Activated CD4-positive, alpha-beta memory T cell treated with anti-CD3 and anti-CD28 coated beads, Interleukin-2, amount 10 ng/mL, durations not matched to agents 7 days and 5 days (primary cell): ENCODE measurements at regions of chr6 and their contacts with region 1.

Region 1: GRCh38 chr6:132798869-132799538 is 567 bp upstream of the SLC18B1 start:
- DNase-seq: peak; percentile 71
- H3K4me3 Mint-ChIP-seq: peak overlapping the region; percentile 88
- H3K27ac Mint-ChIP-seq: no peak overlapping the region
- H3K4me1 Mint-ChIP-seq: peaks cover 15% of the 10 kb centered on the region
- H3K27me3 Mint-ChIP-seq: peaks cover 5% of the 10 kb centered on the region

Region 2: DNA sequence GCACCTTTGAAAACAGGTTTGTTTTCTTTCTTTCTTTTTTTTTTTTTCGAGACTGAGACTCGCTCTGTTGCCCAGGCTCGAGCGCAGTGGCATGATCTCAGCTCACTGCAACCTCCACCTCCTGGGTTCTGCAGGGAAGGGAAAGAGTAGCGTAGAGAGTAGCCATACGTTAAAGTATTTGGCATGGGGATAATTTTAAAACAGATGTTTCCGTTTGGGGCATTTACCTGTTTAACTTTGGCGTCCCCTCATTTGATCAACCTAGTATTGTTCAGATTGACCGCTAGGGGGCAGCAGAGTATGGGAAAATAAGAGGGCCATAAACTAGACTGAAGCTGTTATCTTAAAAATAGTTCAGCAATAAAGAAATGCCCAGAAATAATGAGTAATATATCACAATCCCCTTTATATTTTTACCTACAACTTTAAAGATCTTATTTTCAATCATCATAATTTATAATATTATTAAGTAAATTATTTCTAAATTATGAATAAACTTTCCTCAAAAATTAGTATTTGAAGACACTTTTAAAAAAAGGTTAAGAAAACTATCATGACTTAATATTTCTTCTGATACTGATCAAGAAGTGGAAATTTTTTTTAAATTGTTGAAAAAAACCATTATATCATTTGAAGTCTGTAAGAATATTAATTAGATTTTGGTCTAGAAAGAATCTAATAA is 268.6 kb before region 1 on chr6:
- CTCF ChIA-PET with region 1: interaction called, 13 read pairs
- POLR2A ChIA-PET with region 1: no interaction called
- DNase-seq: peak; percentile 69
- H3K4me3 Mint-ChIP-seq: no peak overlapping the region
- H3K27ac Mint-ChIP-seq: no peak overlapping the region
- H3K4me1 Mint-ChIP-seq: no peaks in the 10 kb centered on the region
- H3K27me3 Mint-ChIP-seq: peaks cover 23% of the 10 kb centered on the region

Region 3: GRCh38 chr6:132768051-132768517 is 30.9 kb before region 1 on chr6:
- CTCF ChIA-PET with region 1: interaction called, 14 read pairs
- POLR2A ChIA-PET with region 1: interaction called, 4 read pairs
- DNase-seq: peak; percentile 21
- H3K4me3 Mint-ChIP-seq: no peak overlapping the region
- H3K27ac Mint-ChIP-seq: no peak overlapping the region
- H3K4me1 Mint-ChIP-seq: peaks cover 14% of the 10 kb centered on the region
- H3K27me3 Mint-ChIP-seq: no peaks in the 10 kb centered on the region

Region 4: GRCh38 chr6:132780770-132781371 is 18.1 kb before region 1 on chr6:
- CTCF ChIA-PET with region 1: interaction called, 15 read pairs
- POLR2A ChIA-PET with region 1: interaction called, 7 read pairs
- DNase-seq: no peak
- H3K4me3 Mint-ChIP-seq: no peak overlapping the region
- H3K27ac Mint-ChIP-seq: no peak overlapping the region
- H3K4me1 Mint-ChIP-seq: no peaks in the 10 kb centered on the region
- H3K27me3 Mint-ChIP-seq: no peaks in the 10 kb centered on the region

Region 5: DNA sequence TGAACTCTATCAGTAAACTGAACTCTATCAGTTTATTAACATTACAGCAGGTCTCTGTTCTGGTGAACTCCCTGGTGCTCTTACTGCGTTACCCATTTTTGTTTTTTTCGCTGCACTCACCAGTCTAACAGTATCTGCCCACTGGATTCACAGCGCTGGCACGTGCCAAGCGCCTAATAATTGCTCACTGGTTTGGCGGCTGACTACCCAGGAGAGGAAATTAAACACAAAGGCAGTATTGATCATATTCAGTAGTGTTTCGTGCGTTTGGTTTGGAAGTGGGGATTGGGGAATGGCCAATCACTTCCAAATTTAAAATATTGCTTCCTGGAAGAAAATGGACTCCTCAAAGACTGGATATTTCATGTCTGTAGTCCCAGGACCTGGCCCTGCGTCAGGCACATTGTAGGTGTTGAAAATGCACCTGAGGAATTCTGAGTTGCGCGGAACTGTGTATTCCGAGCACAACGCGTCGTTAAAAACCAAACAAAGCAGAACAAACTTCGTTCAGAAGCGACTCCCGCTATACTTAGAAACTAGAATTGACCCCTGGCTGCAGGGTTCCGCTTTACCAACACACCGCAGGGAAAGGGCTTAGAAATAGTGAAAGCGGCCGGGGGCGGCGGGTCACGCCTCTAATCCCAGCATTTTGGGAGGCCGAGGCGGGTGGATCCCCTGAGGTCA is 14.3 kb after region 1 on chr6:
- CTCF ChIA-PET with region 1: interaction called, 83 read pairs
- POLR2A ChIA-PET with region 1: interaction called, 155 read pairs
- DNase-seq: peak; percentile 44
- H3K4me3 Mint-ChIP-seq: peak overlapping the region; percentile 96
- H3K27ac Mint-ChIP-seq: peak overlapping the region; percentile 99
- H3K4me1 Mint-ChIP-seq: peaks cover 42% of the 10 kb centered on the region
- H3K27me3 Mint-ChIP-seq: peaks cover 13% of the 10 kb centered on the region